Activated naive CD4-positive, alpha-beta T cell treated with anti-CD3 and anti-CD28 coated beads for 36 hours (primary cell): ENCODE measurements at regions of chr1 and their contacts with region 1.

Region 1: DNA sequence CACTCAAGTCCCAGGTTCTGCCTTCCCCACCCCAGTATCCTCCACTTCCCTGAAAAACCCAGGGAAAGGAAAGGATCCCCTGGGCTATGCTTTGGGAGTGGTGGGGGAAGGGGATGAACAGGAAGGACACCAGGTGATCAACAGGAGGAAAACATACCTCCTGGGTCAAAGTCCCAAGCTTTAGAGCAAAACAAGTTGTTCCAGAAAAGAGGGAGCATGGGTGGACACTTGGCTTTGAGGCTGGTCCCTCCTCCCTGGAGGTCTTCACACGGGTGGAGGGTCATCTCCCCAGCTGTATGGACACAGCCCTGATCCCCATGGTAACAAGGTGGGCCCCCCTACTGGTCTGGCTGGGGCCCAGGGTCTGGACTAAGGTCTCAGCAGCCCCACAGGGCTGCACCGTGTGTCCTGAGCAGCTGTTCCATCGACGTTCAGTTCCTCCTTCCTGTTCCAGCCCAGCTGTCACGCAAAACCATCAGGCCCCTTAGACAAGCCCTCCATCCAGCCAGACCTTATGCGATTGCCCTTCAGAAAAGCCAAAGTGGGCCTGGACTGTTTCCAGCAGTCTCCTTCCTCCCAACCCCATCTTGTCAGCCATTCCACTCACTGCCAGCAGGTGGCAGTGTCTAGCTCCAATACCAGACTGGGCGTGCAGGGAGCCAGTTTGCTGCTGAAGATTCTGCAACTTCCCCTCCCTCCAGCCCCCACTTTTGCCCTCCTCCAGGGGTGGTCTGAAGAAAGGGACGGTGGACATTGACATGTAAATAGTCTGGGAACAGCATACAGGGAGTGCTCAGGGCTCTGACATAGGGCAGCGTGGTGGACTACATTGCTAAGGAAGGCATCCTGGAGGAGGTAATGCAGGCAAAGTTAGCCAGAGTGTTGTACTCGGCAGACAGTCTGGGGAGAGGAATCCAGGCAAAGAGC is 2.9 kb upstream of the PDZK1IP1 start:
- DNase-seq: peak; percentile 79
- H3K4me3 Mint-ChIP-seq: no peak overlapping the region
- H3K27ac Mint-ChIP-seq: no peak overlapping the region
- H3K4me1 Mint-ChIP-seq: no peaks in the 10 kb centered on the region
- H3K27me3 Mint-ChIP-seq: no peaks in the 10 kb centered on the region

Region 2: DNA sequence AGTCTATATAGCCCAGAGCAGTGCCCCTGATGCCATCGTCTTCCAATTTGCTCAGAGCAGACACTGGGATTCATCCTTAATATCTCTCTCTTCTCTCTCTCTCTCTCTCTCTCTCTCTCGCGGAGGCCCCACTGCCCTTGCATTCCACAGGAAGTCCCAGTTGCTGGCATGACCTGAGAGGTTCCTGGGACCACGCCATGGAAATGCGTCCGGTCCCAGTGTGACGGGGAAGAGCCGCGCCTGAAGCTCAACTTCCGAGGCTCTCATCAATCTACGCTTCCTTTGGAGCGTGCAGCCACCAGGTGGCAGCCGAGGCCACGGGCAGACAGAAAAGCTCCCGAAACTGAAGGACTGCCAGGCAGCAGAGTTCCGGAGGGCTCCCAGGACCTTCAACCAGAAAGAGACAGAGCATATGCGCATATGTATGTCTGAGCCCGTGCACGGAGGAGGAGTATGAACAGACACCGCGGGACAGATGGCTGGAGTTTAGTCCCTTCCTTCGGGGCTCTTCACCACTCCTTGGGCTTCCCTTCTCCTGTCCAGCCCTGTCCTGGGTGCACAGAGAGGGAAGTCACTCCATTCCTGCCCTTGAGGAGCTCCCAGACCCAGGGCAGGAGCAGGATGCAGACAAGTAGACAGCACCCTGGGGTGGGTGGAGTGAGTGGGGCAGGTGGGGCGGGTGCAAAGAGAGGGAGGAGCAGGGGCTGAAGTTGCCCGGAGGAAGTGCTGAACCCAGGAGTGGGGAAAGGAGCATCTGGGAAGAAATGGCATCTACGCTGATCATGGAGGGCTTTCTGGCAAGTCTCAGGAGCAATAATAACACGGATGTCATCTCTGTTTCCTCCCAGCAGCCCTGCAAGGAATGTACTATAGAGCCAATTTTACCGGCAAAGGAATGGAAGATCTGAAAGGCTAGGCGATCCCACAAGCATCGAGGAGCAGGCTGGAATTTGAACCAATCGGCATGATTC is 13.4 kb before region 1 on chr1:
- CTCF ChIA-PET with region 1: interaction called, 21 read pairs
- intact Hi-C with region 1: no loop called
- DNase-seq: peak; percentile 90
- H3K4me3 Mint-ChIP-seq: peak overlapping the region; percentile 79
- H3K27ac Mint-ChIP-seq: no peak overlapping the region
- H3K4me1 Mint-ChIP-seq: peaks cover 10% of the 10 kb centered on the region
- H3K27me3 Mint-ChIP-seq: peaks cover 34% of the 10 kb centered on the region

Region 3: GRCh38 chr1:47262787-47263413 is 70.2 kb after region 1 on chr1:
- CTCF ChIA-PET with region 1: interaction called, 20 read pairs
- intact Hi-C with region 1: loop called (anchors 1 kb)
- DNase-seq: peak; percentile 48
- H3K4me3 Mint-ChIP-seq: no peak overlapping the region
- H3K27ac Mint-ChIP-seq: no peak overlapping the region
- H3K4me1 Mint-ChIP-seq: no peaks in the 10 kb centered on the region
- H3K27me3 Mint-ChIP-seq: no peaks in the 10 kb centered on the region

Region 4: DNA sequence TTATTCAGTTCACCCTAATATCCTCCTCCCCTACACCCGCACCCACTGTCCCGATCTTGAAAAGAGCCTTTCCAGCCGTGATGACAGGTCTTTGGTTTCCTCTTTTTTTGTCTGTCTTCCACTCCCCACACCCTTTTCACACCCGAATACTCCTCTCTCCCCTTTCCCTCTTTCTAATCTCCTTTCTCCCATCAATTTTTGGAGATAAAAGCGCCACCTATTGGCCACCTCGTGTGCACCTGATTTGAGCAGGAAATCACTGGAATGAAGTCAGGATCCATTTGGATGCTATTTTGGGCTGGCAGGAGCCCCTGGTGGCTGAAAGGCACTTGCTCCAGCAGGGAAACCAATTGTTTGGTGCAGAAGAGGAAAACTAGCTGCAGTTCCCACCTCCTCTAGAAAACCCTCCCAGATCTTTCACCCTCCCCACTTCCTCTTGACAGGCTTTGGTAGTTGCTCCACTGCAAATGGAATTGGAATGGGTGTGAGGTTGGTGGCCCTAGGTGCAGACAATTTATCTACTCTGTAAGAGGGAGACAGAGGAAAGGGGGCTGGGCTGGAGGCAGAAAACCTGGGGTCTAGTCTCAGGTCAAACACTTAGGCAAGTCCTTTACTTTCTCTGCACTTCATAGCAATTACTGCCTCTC is 231.7 kb after region 1 on chr1:
- CTCF ChIA-PET with region 1: interaction called, 6 read pairs
- intact Hi-C with region 1: loop called (anchors 1 kb)
- DNase-seq: peak; percentile 34
- H3K4me3 Mint-ChIP-seq: no peak overlapping the region
- H3K27ac Mint-ChIP-seq: no peak overlapping the region
- H3K4me1 Mint-ChIP-seq: peaks cover 2% of the 10 kb centered on the region
- H3K27me3 Mint-ChIP-seq: peaks cover 42% of the 10 kb centered on the region

Region 5: GRCh38 chr1:47725992-47726855 is 533.5 kb after region 1 on chr1:
- CTCF ChIA-PET with region 1: interaction called, 10 read pairs
- intact Hi-C with region 1: no loop called
- DNase-seq: peak; percentile 83
- H3K4me3 Mint-ChIP-seq: peak overlapping the region; percentile 30
- H3K27ac Mint-ChIP-seq: no peak overlapping the region
- H3K4me1 Mint-ChIP-seq: peaks cover 7% of the 10 kb centered on the region
- H3K27me3 Mint-ChIP-seq: peaks cover 30% of the 10 kb centered on the region